ENCODE measurements at regions of chr11 and their contacts with region 1.

Region 1: DNA sequence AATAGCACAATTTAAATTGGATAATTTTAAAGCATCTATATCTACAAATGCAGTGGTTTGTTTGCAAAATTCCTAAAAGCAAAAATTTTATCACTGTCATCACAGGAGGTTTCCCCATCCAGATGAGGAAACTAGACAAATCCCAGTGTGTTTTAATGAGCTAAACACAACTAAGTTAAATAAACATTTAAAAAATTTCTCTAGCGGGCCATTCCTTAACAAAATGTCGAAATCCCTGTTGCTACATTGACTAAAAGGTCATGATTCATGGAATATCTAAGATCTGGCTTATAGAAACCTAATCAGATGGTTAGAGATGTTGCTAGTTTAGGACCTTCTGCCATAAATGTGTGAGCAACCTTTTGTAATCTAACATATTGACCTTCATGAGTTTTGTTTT is 107.3 kb upstream of the BDNF start:
- DNase-seq: no peak
- ATAC-seq: no peak
- H3K4me3 Mint-ChIP-seq: no peak overlapping the region
- H3K27ac Mint-ChIP-seq: no peak overlapping the region
- H3K4me1 Mint-ChIP-seq: no peaks in the 10 kb centered on the region
- H3K27me3 Mint-ChIP-seq: peaks cover 2% of the 10 kb centered on the region
- CTCF ChIP-seq: no peak

Region 2: GRCh38 chr11:27535103-27535502 is 272.5 kb before region 1 on chr11:
- CTCF ChIA-PET with region 1: no interaction called
- POLR2A ChIA-PET with region 1: no interaction called
- intact Hi-C with region 1: no loop called
- DNase-seq: no peak
- ATAC-seq: no peak
- H3K4me3 Mint-ChIP-seq: no peak overlapping the region
- H3K27ac Mint-ChIP-seq: no peak overlapping the region
- H3K4me1 Mint-ChIP-seq: no peaks in the 10 kb centered on the region
- H3K27me3 Mint-ChIP-seq: peaks cover 6% of the 10 kb centered on the region
- CTCF ChIP-seq: no peak

Region 3: DNA sequence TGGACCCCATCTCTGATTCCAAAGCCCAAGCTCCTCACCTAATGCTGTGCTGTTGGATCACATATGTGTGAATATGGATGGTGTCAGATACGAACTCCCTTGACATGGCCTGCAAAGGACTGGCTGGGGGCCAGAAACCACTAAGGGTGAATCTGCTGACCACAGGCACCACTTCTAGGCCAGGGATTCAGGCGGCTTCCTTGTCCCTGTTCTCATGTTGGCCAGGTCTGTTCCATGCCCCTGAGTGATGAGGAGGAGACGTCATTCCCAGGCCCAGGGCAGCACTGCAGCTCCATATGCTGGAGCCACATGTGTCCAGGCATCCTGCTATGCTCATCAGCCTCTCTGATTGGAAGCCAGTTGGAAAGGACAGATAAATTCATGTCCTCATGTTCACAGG is 22.6 kb after region 1 on chr11:
- CTCF ChIA-PET with region 1: no interaction called
- POLR2A ChIA-PET with region 1: interaction called, 11 read pairs
- intact Hi-C with region 1: no loop called
- DNase-seq: no peak
- ATAC-seq: no peak
- H3K4me3 Mint-ChIP-seq: no peak overlapping the region
- H3K27ac Mint-ChIP-seq: no peak overlapping the region
- H3K4me1 Mint-ChIP-seq: no peaks in the 10 kb centered on the region
- H3K27me3 Mint-ChIP-seq: no peaks in the 10 kb centered on the region
- CTCF ChIP-seq: no peak

Region 4: DNA sequence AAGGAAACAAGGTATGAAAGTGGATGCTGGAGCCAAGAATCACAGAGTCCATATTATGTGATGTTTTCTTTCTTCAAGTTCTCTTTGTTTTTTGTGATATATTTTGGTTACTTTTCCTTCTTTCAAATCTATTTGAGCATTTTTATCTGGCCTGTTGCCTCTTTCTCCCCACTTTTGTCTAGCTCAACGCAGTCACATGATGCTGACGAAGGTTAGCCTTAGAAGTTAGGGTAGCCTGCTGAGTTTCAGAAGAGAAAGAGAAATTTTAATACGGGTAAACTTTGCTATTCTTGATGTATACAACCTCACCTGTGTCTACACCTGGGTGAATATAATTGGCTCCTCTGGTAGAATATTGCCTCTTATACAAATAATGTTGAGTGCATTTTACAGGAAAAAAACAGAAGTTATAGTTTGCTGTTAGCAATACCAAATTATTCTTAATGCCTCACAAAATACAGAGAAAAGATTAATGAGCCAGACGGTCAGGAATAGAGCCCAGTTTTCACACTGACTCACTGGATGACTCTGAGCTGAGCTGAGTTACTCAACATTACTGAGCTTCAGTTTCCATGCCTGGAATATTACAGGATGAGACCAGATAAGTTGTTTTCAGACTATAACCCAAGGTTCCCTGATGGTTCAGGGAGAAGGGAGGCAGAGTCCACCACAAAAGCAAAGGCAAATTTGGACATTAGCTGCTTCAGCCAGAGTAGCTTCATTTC is 54.3 kb after region 1 on chr11:
- CTCF ChIA-PET with region 1: no interaction called
- POLR2A ChIA-PET with region 1: no interaction called
- intact Hi-C with region 1: no loop called
- DNase-seq: no peak
- ATAC-seq: no peak
- H3K4me3 Mint-ChIP-seq: no peak overlapping the region
- H3K27ac Mint-ChIP-seq: no peak overlapping the region
- H3K4me1 Mint-ChIP-seq: no peaks in the 10 kb centered on the region
- H3K27me3 Mint-ChIP-seq: no peaks in the 10 kb centered on the region
- CTCF ChIP-seq: no peak

Region 5: DNA sequence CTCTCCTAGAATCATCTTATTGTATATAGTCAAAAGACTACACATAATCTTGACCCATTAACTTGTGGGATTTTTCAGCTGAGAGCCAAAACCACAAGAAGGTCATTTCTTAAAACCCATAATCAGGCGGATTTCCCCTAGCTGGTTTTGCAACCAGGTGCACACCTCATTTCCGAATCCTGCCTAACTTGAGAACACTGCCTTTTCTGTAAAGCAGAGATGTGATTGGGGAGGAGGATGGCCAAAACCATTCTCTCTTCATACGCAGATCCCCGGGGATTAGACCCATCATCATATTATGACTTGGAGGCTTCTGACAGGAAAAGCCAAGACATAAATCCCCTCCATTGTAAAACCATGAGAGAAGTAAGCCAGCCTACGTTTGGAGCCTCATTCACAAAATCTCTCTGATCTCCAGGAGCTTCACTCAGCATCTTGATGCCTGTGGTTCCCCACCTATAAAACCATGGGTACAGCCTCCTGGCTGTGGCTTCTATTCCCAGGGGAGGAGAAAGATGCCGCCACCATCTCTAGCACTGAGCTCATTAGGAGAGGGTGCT is 109.0 kb after region 1 on chr11:
- CTCF ChIA-PET with region 1: no interaction called
- POLR2A ChIA-PET with region 1: no interaction called
- intact Hi-C with region 1: no loop called
- DNase-seq: no peak
- ATAC-seq: no peak
- H3K4me3 Mint-ChIP-seq: no peak overlapping the region
- H3K27ac Mint-ChIP-seq: no peak overlapping the region
- H3K4me1 Mint-ChIP-seq: no peaks in the 10 kb centered on the region
- H3K27me3 Mint-ChIP-seq: no peaks in the 10 kb centered on the region
- CTCF ChIP-seq: no peak

Measured in activated B cell treated with CpG ODN at 0.5 μM for 24 hours (primary cell).